Uterus (tissue), 4 donors: ENCODE measurements at regions of chr17 and their contacts with region 1.

Region 1: GRCh38 chr17:77375917-77376651 is 235.3 kb downstream of the SEC14L1 start:
- DNase-seq: peak; percentile 76 to 81
- H3K4me3 ChIP-seq: peak overlapping the region; percentile 10 to 11
- H3K27ac ChIP-seq: peak overlapping the region; percentile 97 to 98
- H3K4me1 ChIP-seq: peaks cover 12 to 54% of the 10 kb centered on the region in 2 donors
- H3K27me3 ChIP-seq: no peaks in the 10 kb centered on the region
- CTCF ChIP-seq: no peak
- POLR2A ChIP-seq: peak in 1 of 2 donors; percentile 49

Region 2: DNA sequence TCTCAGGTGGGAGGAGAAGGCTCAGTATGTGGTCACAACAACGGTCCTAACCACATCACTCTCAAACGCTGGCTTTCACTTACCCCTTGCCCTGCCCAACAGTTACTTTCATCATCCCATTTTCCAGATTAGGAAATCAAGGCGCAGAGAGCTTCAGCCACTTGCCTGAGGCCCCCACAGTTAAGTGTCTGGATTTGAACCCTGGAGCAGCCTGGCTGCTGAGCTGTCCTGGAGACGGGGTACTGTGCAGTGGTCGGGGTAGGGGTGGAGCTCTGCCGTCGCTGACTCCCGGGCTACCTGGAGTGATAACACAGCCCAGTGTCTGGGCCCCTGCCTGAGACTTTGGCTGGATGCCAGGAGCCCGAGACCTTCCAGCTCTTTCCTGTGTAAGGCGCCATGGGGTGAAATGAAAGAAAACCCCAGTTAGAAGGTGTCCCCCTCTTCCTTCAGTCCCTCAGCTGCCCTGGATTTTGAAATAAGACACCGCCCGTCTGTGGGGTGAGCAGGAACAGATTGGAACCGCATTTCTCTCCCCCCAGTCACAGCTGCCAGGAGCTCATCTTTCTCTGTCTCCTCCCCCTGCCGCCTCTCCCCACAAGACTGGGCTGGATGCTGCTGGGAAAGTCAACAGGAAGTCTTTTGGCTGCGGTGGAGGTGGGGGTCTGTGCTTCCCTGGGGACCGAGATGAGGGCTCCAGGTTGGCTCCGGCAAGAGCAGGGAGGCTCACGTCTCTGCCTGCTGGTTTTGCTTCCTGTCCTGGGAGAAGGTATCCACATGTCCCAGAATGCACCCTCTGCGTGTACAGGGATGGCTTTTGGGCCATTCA is 44.9 kb after region 1 on chr17:
- intact Hi-C with region 1: loop called (anchors 5 kb)
- DNase-seq: peak; percentile 84 to 91
- H3K4me3 ChIP-seq: no peak overlapping the region
- H3K27ac ChIP-seq: peak overlapping the region; percentile 92 to 97
- H3K4me1 ChIP-seq: peaks cover 31 to 52% of the 10 kb centered on the region in 2 donors
- H3K27me3 ChIP-seq: no peaks in the 10 kb centered on the region
- CTCF ChIP-seq: peak in 1 of 4 experiments; percentile 4
- POLR2A ChIP-seq: peak; percentile 18 to 30